K562 (cell line): ENCODE measurements at regions of chr10 and their contacts with region 1.

Region 1: GRCh38 chr10:21078410-21079329 is 181.6 kb upstream of the NEBL start:
- DNase-seq: peak; percentile 34 to 86 (median 46)
- ATAC-seq: peak; percentile 96
- H3K4me3 ChIP-seq: no peak overlapping the region
- H3K27ac ChIP-seq: no peak overlapping the region
- H3K4me1 ChIP-seq: no peaks in the 10 kb centered on the region; a peak in 2 of 5 replicates
- H3K27me3 ChIP-seq: no peaks in the 10 kb centered on the region
- CTCF ChIP-seq: peak; percentile 71 to 89 (median 85)
- EP300 ChIP-seq: no peak
- POLR2A ChIP-seq: no peak
- RAD21 ChIP-seq: peak; percentile 93 to 96

Region 2: DNA sequence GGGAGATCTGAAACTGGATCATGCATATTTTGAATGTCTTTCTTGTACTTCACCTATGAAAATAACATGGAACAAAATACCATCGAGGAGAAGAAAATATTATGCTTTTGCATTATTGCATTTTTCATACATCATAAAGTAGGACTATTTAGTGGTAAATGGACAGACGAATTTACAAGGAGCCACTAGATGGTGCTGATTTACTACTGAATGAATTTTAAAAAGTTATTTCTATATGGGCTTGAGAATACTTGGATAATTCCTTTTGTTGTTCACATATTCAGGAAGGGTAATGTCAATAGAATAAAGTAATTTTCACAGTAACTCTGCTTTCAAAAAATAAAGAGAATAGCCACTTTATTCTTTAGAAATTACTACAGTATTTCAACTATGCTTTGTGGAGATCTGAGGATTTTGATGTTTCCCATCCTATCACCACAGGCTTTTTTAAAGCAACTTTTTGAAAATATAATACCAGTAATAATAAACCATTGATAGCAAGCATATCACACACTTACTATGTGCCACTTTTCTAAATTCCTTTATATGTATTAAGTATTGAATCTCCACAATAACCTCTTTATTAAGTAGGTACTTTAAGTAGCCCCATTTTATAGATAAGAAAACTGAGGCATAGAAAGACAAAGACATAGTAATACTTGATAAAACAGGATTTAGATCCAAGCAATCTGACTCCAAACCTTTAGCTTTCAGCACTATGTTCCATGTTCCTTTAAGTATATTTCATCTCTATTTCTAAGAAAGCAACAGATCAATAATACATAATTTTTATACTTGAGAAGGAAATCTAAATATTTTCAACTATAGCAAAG is 220.2 kb before region 1 on chr10:
- CTCF ChIA-PET with region 1: no interaction called
- POLR2A ChIA-PET with region 1: no interaction called
- in situ Hi-C with region 1: no loop called
- intact Hi-C with region 1: loop called (anchors 5 kb)
- DNase-seq: peak in 1 of 4 experiments; percentile 33
- ATAC-seq: peak; percentile 68
- H3K4me3 ChIP-seq: no peak overlapping the region
- H3K27ac ChIP-seq: no peak overlapping the region
- H3K4me1 ChIP-seq: no peaks in the 10 kb centered on the region
- H3K27me3 ChIP-seq: no peaks in the 10 kb centered on the region
- CTCF ChIP-seq: peak in 2 of 3 experiments; percentile 16 to 68; a peak in 3 of 6 replicates
- EP300 ChIP-seq: no peak
- POLR2A ChIP-seq: no peak
- RAD21 ChIP-seq: peak; percentile 67 to 84

Region 3: GRCh38 chr10:21166557-21167287 is 88.1 kb after region 1 on chr10:
- CTCF ChIA-PET with region 1: no interaction called
- POLR2A ChIA-PET with region 1: no interaction called
- in situ Hi-C with region 1: loop called (anchors 5 kb)
- intact Hi-C with region 1: no loop called
- DNase-seq: peak in 2 of 4 experiments; percentile 33 to 70
- ATAC-seq: peak; percentile 81
- H3K4me3 ChIP-seq: no peak overlapping the region
- H3K27ac ChIP-seq: peak overlapping the region; percentile 54
- H3K4me1 ChIP-seq: peaks cover 0 to 12% of the 10 kb centered on the region in 2 experiments; a peak in 2 of 5 replicates
- H3K27me3 ChIP-seq: no peaks in the 10 kb centered on the region
- CTCF ChIP-seq: no peak
- EP300 ChIP-seq: peak; percentile 36; the same call in 1 of the 2 replicates
- POLR2A ChIP-seq: no peak
- RAD21 ChIP-seq: no peak

Region 4: GRCh38 chr10:21265621-21266020 is 187.0 kb after region 1 on chr10:
- CTCF ChIA-PET with region 1: interaction called, 36 read pairs
- POLR2A ChIA-PET with region 1: no interaction called
- in situ Hi-C with region 1: loop called (anchors 5 kb)
- intact Hi-C with region 1: loop called (anchors 1 kb)
- DNase-seq: no peak
- ATAC-seq: no peak; the same call in 2 of the 3 replicates
- H3K4me3 ChIP-seq: no peak overlapping the region
- H3K27ac ChIP-seq: no peak overlapping the region
- H3K4me1 ChIP-seq: peaks cover 0 to 5% of the 10 kb centered on the region in 2 experiments; a peak in 1 of 5 replicates
- H3K27me3 ChIP-seq: peaks cover 0 to 5% of the 10 kb centered on the region in 2 experiments; a peak in 1 of 5 replicates
- CTCF ChIP-seq: no peak
- EP300 ChIP-seq: no peak
- POLR2A ChIP-seq: no peak
- RAD21 ChIP-seq: no peak

Region 5: DNA sequence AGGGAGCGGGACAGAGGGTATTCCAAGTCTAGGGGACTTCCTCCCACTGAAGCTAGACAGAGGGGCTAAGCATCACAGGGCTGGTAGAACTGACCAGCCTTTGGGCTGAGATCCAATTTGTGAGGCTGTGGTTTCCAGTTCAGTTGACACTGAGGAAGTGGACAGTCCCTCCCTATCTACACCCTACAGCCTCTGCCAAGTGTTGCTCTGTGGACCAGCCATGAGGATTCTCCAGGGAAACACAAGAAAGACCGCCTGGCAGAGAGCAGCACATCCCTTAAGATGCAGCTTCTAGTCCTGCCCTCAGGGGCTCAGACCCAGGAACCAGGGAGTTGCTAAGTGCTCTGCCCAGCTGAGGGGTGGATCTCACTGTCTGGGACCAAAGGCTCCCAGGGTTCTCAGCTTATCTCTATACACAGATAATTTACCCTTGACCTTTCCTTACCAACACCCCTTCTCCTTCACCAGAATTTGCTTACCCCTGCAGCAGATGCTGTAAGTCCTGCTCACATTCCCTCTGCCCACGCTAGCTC is 194.8 kb after region 1 on chr10:
- CTCF ChIA-PET with region 1: interaction called, 36 read pairs
- POLR2A ChIA-PET with region 1: no interaction called
- in situ Hi-C with region 1: loop called (anchors 5 kb)
- intact Hi-C with region 1: loop called (anchors 1 kb)
- DNase-seq: peak; percentile 20 to 35 (median 23)
- ATAC-seq: peak; percentile 73
- H3K4me3 ChIP-seq: no peak overlapping the region
- H3K27ac ChIP-seq: peak overlapping the region; percentile 19; the same call in 1 of the 3 replicates
- H3K4me1 ChIP-seq: peaks cover 0 to 13% of the 10 kb centered on the region in 2 experiments; a peak in 3 of 5 replicates
- H3K27me3 ChIP-seq: no peaks in the 10 kb centered on the region
- CTCF ChIP-seq: no peak
- EP300 ChIP-seq: no peak
- POLR2A ChIP-seq: no peak
- RAD21 ChIP-seq: no peak; a peak in 1 of 4 replicates